Naive thymus-derived CD4-positive, alpha-beta T cell (primary cell): ENCODE measurements at regions of chr11 and their contacts with region 1.

Region 1: GRCh38 chr11:65833297-65834030 is at the start of gene SNX32:
- DNase-seq: peak; percentile 88 to 94 (median 93)
- ATAC-seq: peak; percentile 100
- H3K4me3 ChIP-seq: peak within 1 kb of the TSS; percentile 91
- H3K4me3 Mint-ChIP-seq: no peak within 1 kb of the TSS
- H3K27ac ChIP-seq: peak within 1 kb of the TSS; percentile 78
- H3K27ac Mint-ChIP-seq: peak within 1 kb of the TSS in 1 of 9 donors; percentile 91
- H3K4me1 ChIP-seq: peaks cover 10 to 13% of the 10 kb centered on the region in 2 donors
- H3K4me1 Mint-ChIP-seq: peaks cover 7 to 17% (median 7%) of the 10 kb centered on the region in 7 donors
- H3K27me3 ChIP-seq: no peaks in the 10 kb centered on the region
- H3K27me3 Mint-ChIP-seq: peaks cover 0 to 21% (median 0%) of the 10 kb centered on the region in 5 donors
- total RNA-seq, gene SNX32: 0.81 to 2.0 (median 1.1) TPM

Region 2: DNA sequence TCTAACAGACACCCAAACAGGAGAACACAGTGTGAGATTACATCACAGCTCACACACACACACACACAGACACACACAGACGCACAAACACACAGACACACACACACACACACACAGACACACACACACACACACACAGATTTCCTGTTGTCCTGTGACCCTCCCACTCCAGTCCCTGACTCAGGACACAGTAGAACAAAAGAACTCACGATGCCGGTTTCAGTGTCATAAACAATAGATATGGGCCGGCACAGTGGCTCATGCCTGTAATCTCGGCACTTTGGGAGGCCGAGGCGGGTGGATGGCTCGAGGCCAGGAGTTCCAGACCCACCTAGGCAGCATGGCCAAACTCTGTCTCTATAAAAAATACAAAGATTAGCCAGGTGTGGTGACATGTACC is 135.3 kb before region 1 on chr11:
- CTCF ChIA-PET with region 1: no interaction called
- POLR2A ChIA-PET with region 1: no interaction called
- intact Hi-C with region 1: no loop called
- DNase-seq: no peak
- ATAC-seq: no peak
- H3K4me3 ChIP-seq: no peak overlapping the region
- H3K4me3 Mint-ChIP-seq: no peak overlapping the region
- H3K27ac ChIP-seq: no peak overlapping the region
- H3K27ac Mint-ChIP-seq: peak overlapping the region in 1 of 9 donors; percentile 21
- H3K4me1 ChIP-seq: no peaks in the 10 kb centered on the region
- H3K4me1 Mint-ChIP-seq: peaks cover 0 to 5% (median 0%) of the 10 kb centered on the region in 7 donors
- H3K27me3 ChIP-seq: no peaks in the 10 kb centered on the region
- H3K27me3 Mint-ChIP-seq: peaks cover 0 to 18% (median 0%) of the 10 kb centered on the region in 5 donors

Region 3: DNA sequence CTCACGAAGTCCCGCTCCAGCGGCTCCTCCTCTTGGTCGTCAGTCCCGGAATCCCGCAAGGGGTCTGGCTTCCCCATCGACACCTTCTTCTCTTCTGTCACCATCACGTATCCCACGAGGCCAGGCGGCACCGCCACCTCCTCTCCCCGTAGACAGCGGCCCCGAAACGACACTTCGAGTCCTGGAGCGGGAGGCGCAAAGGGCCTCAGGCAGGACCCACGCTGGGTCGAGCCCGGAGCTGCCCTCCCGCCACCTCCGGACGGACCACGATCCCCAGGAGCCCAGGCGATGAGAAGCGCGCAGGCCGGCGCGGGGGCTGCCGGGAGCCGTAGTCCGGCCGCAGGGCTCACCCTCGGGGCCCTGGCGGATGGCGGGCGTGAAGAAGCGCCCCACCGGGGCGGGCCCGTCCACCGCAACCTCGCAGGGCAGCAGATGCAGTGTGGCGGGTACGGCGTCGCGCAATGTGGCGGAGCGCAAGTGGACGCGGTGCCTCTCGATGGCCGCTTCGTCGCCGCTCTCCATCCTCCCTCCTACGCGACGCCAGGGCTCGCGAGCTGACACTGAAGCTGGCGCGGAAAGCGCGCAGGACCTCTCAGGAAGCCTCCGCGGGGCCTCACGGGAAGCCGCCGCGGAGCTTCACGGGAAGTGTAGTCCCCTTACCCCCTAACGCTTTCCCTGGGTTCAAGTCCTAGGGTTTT is 113.1 kb before region 1 on chr11 and contains the start of gene RNASEH2C:
- CTCF ChIA-PET with region 1: no interaction called
- POLR2A ChIA-PET with region 1: no interaction called
- intact Hi-C with region 1: loop called in 1 of 2 experiments (anchors 1 kb)
- DNase-seq: peak; percentile 64 to 83 (median 72)
- ATAC-seq: peak; percentile 95
- H3K4me3 ChIP-seq: peak within 1 kb of the TSS; percentile 70
- H3K4me3 Mint-ChIP-seq: peak within 1 kb of the TSS; percentile 83 to 98 (median 92)
- H3K27ac ChIP-seq: peak within 1 kb of the TSS; percentile 79
- H3K27ac Mint-ChIP-seq: peak within 1 kb of the TSS; percentile 57 to 91 (median 88)
- H3K4me1 ChIP-seq: peaks cover 14 to 16% of the 10 kb centered on the region in 2 donors
- H3K4me1 Mint-ChIP-seq: peaks cover 14 to 41% (median 31%) of the 10 kb centered on the region in 7 donors
- H3K27me3 ChIP-seq: no peaks in the 10 kb centered on the region
- H3K27me3 Mint-ChIP-seq: peaks cover 0 to 2% (median 0%) of the 10 kb centered on the region in 5 donors
- total RNA-seq, gene RNASEH2C: 41.8 to 94.0 (median 82.0) TPM

Region 4: DNA sequence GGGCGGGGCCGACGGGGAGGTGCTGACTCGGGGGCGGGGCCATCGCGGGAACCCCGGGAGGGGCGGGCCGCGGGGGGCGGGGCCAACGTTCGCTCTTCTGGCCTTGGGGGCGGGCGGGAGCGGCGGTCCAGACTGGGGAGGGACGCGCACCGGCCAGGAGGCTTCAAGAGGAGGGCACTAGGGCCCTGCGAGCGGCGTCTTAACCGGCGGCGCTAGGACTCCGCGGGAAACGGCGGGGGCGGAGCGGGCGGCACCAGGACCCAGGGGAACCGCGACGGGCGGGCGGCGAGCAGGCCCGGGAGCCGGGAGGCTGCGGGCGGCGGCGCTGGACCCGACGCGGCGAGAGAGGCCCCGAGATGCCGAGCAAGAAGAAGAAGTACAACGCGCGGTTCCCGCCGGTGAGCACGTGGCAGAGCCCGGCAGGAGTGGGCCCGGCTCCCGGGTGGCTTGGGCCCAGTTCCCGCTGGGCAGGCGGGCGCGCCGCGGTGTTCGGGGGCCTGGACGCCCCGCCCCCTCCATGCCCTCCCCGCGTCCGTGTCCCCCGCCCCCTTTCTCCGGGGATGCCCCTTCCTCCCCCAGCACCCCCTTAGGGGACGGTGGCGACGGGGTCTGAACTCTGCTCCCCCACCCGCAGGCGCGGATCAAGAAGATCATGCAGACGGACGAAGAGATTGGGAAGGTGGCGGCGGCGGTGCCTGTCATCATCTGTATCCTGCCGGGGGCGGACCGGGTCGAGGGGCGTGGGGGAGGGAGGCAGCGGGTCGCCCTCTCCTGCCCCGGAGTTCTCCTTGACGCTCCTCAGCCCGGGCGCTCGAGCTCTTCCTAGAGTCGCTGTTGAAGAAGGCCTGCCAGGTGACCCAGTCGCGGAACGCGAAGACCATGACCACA is 85.9 kb after region 1 on chr11 and contains the start of gene DRAP1:
- CTCF ChIA-PET with region 1: no interaction called
- POLR2A ChIA-PET with region 1: interaction called, 4 read pairs
- intact Hi-C with region 1: loop called in 1 of 2 experiments (anchors 1 kb)
- DNase-seq: peak; percentile 95 to 98 (median 97)
- ATAC-seq: peak; percentile 93
- H3K4me3 ChIP-seq: peak within 1 kb of the TSS; percentile 83
- H3K4me3 Mint-ChIP-seq: peak within 1 kb of the TSS; percentile 86 to 96 (median 93)
- H3K27ac ChIP-seq: peak within 1 kb of the TSS; percentile 95
- H3K27ac Mint-ChIP-seq: peak within 1 kb of the TSS; percentile 79 to 96 (median 90)
- H3K4me1 ChIP-seq: peaks cover 26 to 28% of the 10 kb centered on the region in 2 donors
- H3K4me1 Mint-ChIP-seq: peaks cover 32 to 61% (median 36%) of the 10 kb centered on the region in 7 donors
- H3K27me3 ChIP-seq: no peaks in the 10 kb centered on the region
- H3K27me3 Mint-ChIP-seq: no peaks in the 10 kb centered on the region
- total RNA-seq, gene DRAP1: 72.6 to 166 (median 81.9) TPM